HCT116 (cell line): ENCODE measurements at regions of chr10 and their contacts with region 1.

Region 1: GRCh38 chr10:128211953-128212727 is 85.9 kb upstream of the MKI67 start:
- DNase-seq: peak; percentile 75
- ATAC-seq: peak; percentile 84
- H3K4me3 ChIP-seq: no peak overlapping the region
- H3K27ac ChIP-seq: no peak overlapping the region
- H3K4me1 ChIP-seq: peaks cover 2 to 21% of the 10 kb centered on the region in 2 experiments; a peak in 2 of 4 replicates
- H3K27me3 ChIP-seq: no peaks in the 10 kb centered on the region
- CTCF ChIP-seq: peak; percentile 90 to 100 (median 100)
- POLR2A ChIP-seq: no peak
- RAD21 ChIP-seq: peak; percentile 64

Region 2: GRCh38 chr10:128078136-128078969 is 133.8 kb before region 1 on chr10:
- CTCF ChIA-PET with region 1: interaction called, 8 read pairs
- POLR2A ChIA-PET with region 1: no interaction called
- RAD21 ChIA-PET with region 1: no interaction called
- intact Hi-C with region 1: loop called (anchors 2 kb)
- DNase-seq: peak; percentile 28
- ATAC-seq: peak; percentile 98
- H3K4me3 ChIP-seq: no peak overlapping the region
- H3K27ac ChIP-seq: no peak overlapping the region
- H3K4me1 ChIP-seq: no peaks in the 10 kb centered on the region
- H3K27me3 ChIP-seq: no peaks in the 10 kb centered on the region
- CTCF ChIP-seq: peak; percentile 96 to 97 (median 97)
- POLR2A ChIP-seq: no peak
- RAD21 ChIP-seq: peak; percentile 94

Region 3: DNA sequence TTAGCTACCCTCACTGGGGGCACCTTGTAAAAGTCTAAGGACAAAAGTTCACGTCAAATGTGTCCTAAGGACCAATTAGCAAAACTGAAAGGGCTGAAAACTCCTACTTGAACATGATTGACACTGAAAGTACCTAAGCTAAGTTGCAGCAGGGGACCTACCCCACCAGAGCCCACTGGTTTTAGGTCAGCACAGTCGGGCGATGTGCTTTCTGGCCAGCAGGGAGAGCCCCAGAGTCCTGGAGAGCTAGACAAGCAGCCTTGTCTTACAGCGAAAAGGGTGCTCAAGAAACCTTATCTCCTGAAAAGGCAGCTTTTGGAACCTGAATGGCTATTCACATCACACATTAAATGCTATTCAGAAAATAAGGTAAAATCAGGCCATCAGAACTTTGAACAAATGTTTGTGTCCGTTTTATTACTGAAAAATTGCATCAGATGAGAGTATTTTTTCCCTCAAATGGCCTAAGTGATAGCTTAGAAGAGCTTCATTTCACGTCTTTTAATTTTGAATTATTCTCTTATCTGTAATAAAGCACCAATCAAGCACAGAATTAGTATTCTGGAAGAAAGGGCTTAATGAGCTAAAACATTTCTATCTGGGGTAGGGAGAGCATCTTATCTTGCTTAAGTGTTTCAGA is 33.7 kb before region 1 on chr10:
- CTCF ChIA-PET with region 1: interaction called, 16 read pairs
- POLR2A ChIA-PET with region 1: no interaction called
- RAD21 ChIA-PET with region 1: no interaction called
- intact Hi-C with region 1: no loop called
- DNase-seq: peak; percentile 41
- ATAC-seq: peak; percentile 100
- H3K4me3 ChIP-seq: no peak overlapping the region
- H3K27ac ChIP-seq: no peak overlapping the region
- H3K4me1 ChIP-seq: peaks cover 0 to 4% of the 10 kb centered on the region in 2 experiments; a peak in 2 of 4 replicates
- H3K27me3 ChIP-seq: no peaks in the 10 kb centered on the region; the same call in 1 of the 2 replicates
- CTCF ChIP-seq: peak; percentile 28 to 96 (median 95); a peak in 5 of 6 replicates
- POLR2A ChIP-seq: no peak
- RAD21 ChIP-seq: peak; percentile 30; the same call in 1 of the 2 replicates